Activated CD4-positive, alpha-beta memory T cell treated with anti-CD3 and anti-CD28 coated beads, Interleukin-2, amount 10 ng/mL, durations not matched to agents 7 days and 5 days (primary cell): ENCODE measurements at regions of chr5 and their contacts with region 1.

Region 1: DNA sequence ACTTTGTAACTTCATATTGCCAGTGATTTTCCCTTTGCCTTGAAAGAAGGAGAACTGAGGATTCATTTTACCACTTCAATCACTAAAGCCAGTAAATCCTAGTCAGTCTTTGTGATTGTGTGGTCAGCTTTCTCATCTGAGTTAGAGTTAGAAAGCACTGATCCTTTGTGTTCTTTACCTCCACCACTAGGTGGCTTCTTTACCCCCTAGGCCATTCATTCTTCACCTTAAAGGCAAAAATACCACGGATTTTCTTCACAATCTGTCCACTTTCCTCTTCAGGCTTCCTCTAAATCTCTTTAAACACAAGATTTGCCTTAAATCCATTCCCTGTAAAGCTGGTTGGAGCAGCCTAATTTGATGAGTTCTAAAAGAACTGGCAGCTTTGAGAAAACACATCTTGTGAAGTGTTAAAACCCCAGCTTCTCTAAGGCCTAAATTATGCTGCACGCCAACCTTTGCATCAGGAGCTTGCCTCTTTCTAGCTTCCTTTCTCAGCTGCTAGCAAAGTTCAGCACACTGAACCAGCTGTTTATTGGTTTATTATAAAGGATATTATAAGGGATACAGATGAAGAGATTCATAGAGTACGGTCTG is 20.4 kb downstream of the BDP1 start:
- DNase-seq: no peak
- H3K4me3 Mint-ChIP-seq: no peak overlapping the region
- H3K27ac Mint-ChIP-seq: no peak overlapping the region
- H3K4me1 Mint-ChIP-seq: no peaks in the 10 kb centered on the region
- H3K27me3 Mint-ChIP-seq: no peaks in the 10 kb centered on the region

Region 2: DNA sequence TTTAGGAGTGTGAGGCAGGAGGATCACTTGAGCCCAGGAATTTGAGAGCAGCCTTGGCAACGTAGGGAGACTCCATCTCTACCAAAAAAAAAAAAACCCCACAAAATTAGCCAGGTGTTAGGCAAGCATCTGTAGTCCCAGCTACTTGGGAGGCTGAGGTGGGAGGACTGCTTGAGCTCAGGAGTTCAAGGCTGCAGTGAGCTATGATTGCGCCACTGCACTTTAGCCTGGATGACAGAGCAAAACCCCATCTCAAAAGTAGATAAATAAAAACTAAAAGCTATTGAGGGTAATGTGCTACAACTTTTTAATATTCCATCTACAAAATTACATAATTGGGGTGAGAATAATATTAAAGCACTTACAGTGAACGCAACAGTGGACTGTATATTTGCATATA is 14.5 kb before region 1 on chr5:
- CTCF ChIA-PET with region 1: interaction called, 14 read pairs
- POLR2A ChIA-PET with region 1: interaction called, 3 read pairs
- DNase-seq: no peak
- H3K4me3 Mint-ChIP-seq: no peak overlapping the region
- H3K27ac Mint-ChIP-seq: no peak overlapping the region
- H3K4me1 Mint-ChIP-seq: peaks cover 19% of the 10 kb centered on the region
- H3K27me3 Mint-ChIP-seq: no peaks in the 10 kb centered on the region

Region 3: GRCh38 chr5:71586941-71587765 is 111.3 kb after region 1 on chr5 and contains the start of gene MCCC2:
- CTCF ChIA-PET with region 1: interaction called, 10 read pairs
- POLR2A ChIA-PET with region 1: no interaction called
- DNase-seq: peak; percentile 98
- H3K4me3 Mint-ChIP-seq: peak within 1 kb of the TSS; percentile 98
- H3K27ac Mint-ChIP-seq: peak within 1 kb of the TSS; percentile 97
- H3K4me1 Mint-ChIP-seq: peaks cover 35% of the 10 kb centered on the region
- H3K27me3 Mint-ChIP-seq: no peaks in the 10 kb centered on the region
- total RNA-seq, gene MCCC2: 34.9 to 36.2 TPM

Region 4: GRCh38 chr5:71601222-71602041 is 125.5 kb after region 1 on chr5:
- CTCF ChIA-PET with region 1: interaction called, 11 read pairs
- POLR2A ChIA-PET with region 1: no interaction called
- DNase-seq: peak; percentile 85
- H3K4me3 Mint-ChIP-seq: peak overlapping the region; percentile 22
- H3K27ac Mint-ChIP-seq: peak overlapping the region; percentile 98
- H3K4me1 Mint-ChIP-seq: peaks cover 33% of the 10 kb centered on the region
- H3K27me3 Mint-ChIP-seq: no peaks in the 10 kb centered on the region

Region 5: GRCh38 chr5:71757590-71758543 is 282.0 kb after region 1 on chr5:
- CTCF ChIA-PET with region 1: interaction called, 23 read pairs
- POLR2A ChIA-PET with region 1: interaction called, 6 read pairs
- DNase-seq: peak; percentile 58
- H3K4me3 Mint-ChIP-seq: no peak overlapping the region
- H3K27ac Mint-ChIP-seq: no peak overlapping the region
- H3K4me1 Mint-ChIP-seq: peaks cover 2% of the 10 kb centered on the region
- H3K27me3 Mint-ChIP-seq: peaks cover 7% of the 10 kb centered on the region